ENCODE measurements at regions of chr18 and their contacts with region 1.

Region 1: DNA sequence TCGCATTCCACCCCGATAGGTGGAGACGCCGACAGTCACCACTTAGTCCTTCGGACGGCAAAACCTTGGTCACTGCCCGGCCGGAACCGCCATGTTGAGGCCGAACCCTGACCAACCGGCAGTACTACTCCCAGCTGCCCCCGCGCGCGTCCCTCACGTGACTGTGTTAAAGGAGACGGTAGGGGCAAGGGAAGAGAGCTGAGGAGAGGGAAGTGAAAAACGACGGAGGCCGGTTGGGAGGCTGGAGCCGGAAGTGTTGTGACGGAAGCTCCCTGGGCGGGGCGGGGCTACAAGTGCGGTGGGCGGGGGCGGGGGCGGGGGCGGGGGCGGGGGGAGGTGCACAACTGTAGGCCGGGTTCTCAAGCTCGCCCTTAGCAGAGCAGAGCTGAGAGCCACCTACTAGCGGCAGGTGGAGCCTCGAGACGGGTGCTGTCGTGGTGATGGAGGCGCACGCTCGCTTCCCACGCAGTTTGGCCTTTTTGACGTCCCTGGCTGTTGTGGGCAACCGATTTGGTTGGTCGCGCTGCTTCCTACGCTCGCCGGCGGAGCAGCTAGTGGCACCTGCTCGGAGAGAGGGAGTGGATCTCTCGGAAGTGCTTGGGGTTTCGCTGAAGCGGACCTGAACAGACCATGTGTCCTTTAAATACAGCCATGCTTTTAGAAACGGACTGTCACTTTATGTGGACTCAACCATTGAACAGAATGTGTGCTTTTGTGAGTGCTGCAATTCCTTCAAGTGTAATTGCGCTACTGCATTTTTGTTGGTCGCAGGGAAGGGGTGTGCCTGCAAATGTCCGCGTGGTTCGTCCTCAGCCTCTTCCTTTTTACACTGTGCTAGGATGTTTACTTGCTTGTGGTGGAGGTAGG is at the start of gene TRAPPC8:
- DNase-seq: peak; percentile 91 to 96
- H3K4me3 ChIP-seq: peak within 1 kb of the TSS; percentile 79
- H3K4me3 Mint-ChIP-seq: peak within 1 kb of the TSS; percentile 89
- H3K27ac Mint-ChIP-seq: peak within 1 kb of the TSS; percentile 99
- H3K4me1 ChIP-seq: no peaks in the 10 kb centered on the region
- H3K4me1 Mint-ChIP-seq: peaks cover 6% of the 10 kb centered on the region
- H3K27me3 ChIP-seq: no peaks in the 10 kb centered on the region
- H3K27me3 Mint-ChIP-seq: no peaks in the 10 kb centered on the region
- CTCF ChIP-seq: no peak
- total RNA-seq, gene TRAPPC8: 19.8 and 21.1 TPM in 2 replicates

Region 2: GRCh38 chr18:31920277-31920676 is 23.0 kb before region 1 on chr18:
- CTCF ChIA-PET with region 1: no interaction called
- POLR2A ChIA-PET with region 1: interaction called, 19 read pairs
- intact Hi-C with region 1: no loop called
- DNase-seq: no peak
- H3K4me3 ChIP-seq: no peak overlapping the region
- H3K4me3 Mint-ChIP-seq: no peak overlapping the region
- H3K27ac Mint-ChIP-seq: no peak overlapping the region
- H3K4me1 ChIP-seq: no peaks in the 10 kb centered on the region
- H3K4me1 Mint-ChIP-seq: no peaks in the 10 kb centered on the region
- H3K27me3 ChIP-seq: no peaks in the 10 kb centered on the region
- H3K27me3 Mint-ChIP-seq: no peaks in the 10 kb centered on the region
- CTCF ChIP-seq: no peak

Region 3: GRCh38 chr18:31977270-31977872 is 34.1 kb after region 1 on chr18:
- CTCF ChIA-PET with region 1: interaction called, 8 read pairs
- POLR2A ChIA-PET with region 1: no interaction called
- intact Hi-C with region 1: loop called (anchors 2 kb)
- DNase-seq: peak; percentile 30 to 47
- H3K4me3 ChIP-seq: no peak overlapping the region
- H3K4me3 Mint-ChIP-seq: no peak overlapping the region
- H3K27ac Mint-ChIP-seq: no peak overlapping the region
- H3K4me1 ChIP-seq: no peaks in the 10 kb centered on the region
- H3K4me1 Mint-ChIP-seq: no peaks in the 10 kb centered on the region
- H3K27me3 ChIP-seq: no peaks in the 10 kb centered on the region
- H3K27me3 Mint-ChIP-seq: no peaks in the 10 kb centered on the region
- CTCF ChIP-seq: peak in 1 of 2 experiments; percentile 12

Region 4: GRCh38 chr18:31998880-31999412 is 55.7 kb after region 1 on chr18:
- CTCF ChIA-PET with region 1: no interaction called
- POLR2A ChIA-PET with region 1: no interaction called
- intact Hi-C with region 1: no loop called
- DNase-seq: no peak
- H3K4me3 ChIP-seq: no peak overlapping the region
- H3K4me3 Mint-ChIP-seq: no peak overlapping the region
- H3K27ac Mint-ChIP-seq: no peak overlapping the region
- H3K4me1 ChIP-seq: no peaks in the 10 kb centered on the region
- H3K4me1 Mint-ChIP-seq: no peaks in the 10 kb centered on the region
- H3K27me3 ChIP-seq: no peaks in the 10 kb centered on the region
- H3K27me3 Mint-ChIP-seq: no peaks in the 10 kb centered on the region
- CTCF ChIP-seq: no peak

Region 5: DNA sequence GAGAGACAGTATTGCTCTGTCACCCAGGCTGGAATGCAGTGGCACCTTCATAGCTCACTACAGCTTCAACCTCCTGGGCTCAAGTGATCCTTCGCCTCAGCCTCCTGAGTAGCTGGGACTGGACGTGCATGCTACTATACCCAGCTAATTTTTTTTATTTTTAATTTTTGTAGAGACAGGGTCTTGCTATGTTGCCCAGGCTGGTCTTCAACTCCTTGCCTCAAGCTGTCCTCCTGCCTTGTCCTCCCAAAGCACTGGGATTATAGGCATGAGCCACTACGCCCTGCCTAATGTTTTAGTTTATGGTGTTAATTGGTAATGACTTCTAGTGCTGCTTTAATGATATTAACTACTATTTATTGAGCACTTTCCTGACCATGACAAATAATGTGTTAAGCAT is 166.8 kb after region 1 on chr18:
- CTCF ChIA-PET with region 1: no interaction called
- POLR2A ChIA-PET with region 1: no interaction called
- intact Hi-C with region 1: no loop called
- DNase-seq: no peak
- H3K4me3 ChIP-seq: no peak overlapping the region
- H3K4me3 Mint-ChIP-seq: no peak overlapping the region
- H3K27ac Mint-ChIP-seq: no peak overlapping the region
- H3K4me1 ChIP-seq: no peaks in the 10 kb centered on the region
- H3K4me1 Mint-ChIP-seq: no peaks in the 10 kb centered on the region
- H3K27me3 ChIP-seq: no peaks in the 10 kb centered on the region
- H3K27me3 Mint-ChIP-seq: no peaks in the 10 kb centered on the region
- CTCF ChIP-seq: no peak

Region 6: GRCh38 chr18:32138332-32138982 is 195.2 kb after region 1 on chr18:
- CTCF ChIA-PET with region 1: no interaction called
- POLR2A ChIA-PET with region 1: no interaction called
- intact Hi-C with region 1: no loop called
- DNase-seq: no peak
- H3K4me3 ChIP-seq: no peak overlapping the region
- H3K4me3 Mint-ChIP-seq: no peak overlapping the region
- H3K27ac Mint-ChIP-seq: no peak overlapping the region
- H3K4me1 ChIP-seq: no peaks in the 10 kb centered on the region
- H3K4me1 Mint-ChIP-seq: no peaks in the 10 kb centered on the region
- H3K27me3 ChIP-seq: no peaks in the 10 kb centered on the region
- H3K27me3 Mint-ChIP-seq: no peaks in the 10 kb centered on the region
- CTCF ChIP-seq: no peak